ENCODE measurements at regions of chr3 and their contacts with region 1.

Region 1: GRCh38 chr3:62567097-62568021 is 194.0 kb upstream of the FEZF2 start:
- DNase-seq: peak; percentile 54
- H3K4me3 ChIP-seq: no peak overlapping the region
- H3K27ac ChIP-seq: no peak overlapping the region
- H3K4me1 ChIP-seq: peaks cover 20% of the 10 kb centered on the region
- H3K27me3 ChIP-seq: no peaks in the 10 kb centered on the region
- CTCF ChIP-seq: no peak

Region 2: DNA sequence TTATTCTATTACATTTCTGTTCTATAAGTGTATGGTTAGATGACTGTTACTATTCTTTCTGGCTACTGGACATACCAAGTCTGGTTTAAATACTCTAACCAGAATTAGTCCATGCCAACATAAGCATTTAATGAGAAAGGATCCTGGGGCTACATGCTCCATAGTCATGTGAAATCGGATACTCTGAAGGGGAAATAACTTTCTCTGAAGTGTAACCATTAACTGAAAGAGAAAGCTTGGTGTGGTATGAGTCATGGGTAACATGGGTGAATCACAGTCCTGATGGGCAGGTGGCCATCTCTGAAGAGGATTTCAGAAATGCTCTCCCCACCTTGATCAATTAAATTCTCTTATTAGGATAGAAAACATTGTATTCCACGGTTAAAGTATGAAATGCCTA is 1385.5 kb before region 1 on chr3:
- CTCF ChIA-PET with region 1: interaction called, 16 read pairs
- dilution Hi-C with region 1: no loop called
- in situ Hi-C with region 1: no loop called
- intact Hi-C with region 1: no loop called
- DNase-seq: peak; percentile 82
- H3K4me3 ChIP-seq: no peak overlapping the region
- H3K27ac ChIP-seq: no peak overlapping the region
- H3K4me1 ChIP-seq: no peaks in the 10 kb centered on the region
- H3K27me3 ChIP-seq: no peaks in the 10 kb centered on the region
- CTCF ChIP-seq: no peak

Region 3: GRCh38 chr3:62387251-62387650 is 180.1 kb before region 1 on chr3:
- CTCF ChIA-PET with region 1: no interaction called
- dilution Hi-C with region 1: no loop called
- in situ Hi-C with region 1: no loop called
- intact Hi-C with region 1: no loop called
- DNase-seq: no peak
- H3K4me3 ChIP-seq: no peak overlapping the region
- H3K27ac ChIP-seq: no peak overlapping the region
- H3K4me1 ChIP-seq: no peaks in the 10 kb centered on the region
- H3K27me3 ChIP-seq: peaks cover 5% of the 10 kb centered on the region
- CTCF ChIP-seq: no peak

Measured in mammary epithelial cell (primary cell).